ENCODE measurements at regions of chr7 and their contacts with region 1.

Region 1: DNA sequence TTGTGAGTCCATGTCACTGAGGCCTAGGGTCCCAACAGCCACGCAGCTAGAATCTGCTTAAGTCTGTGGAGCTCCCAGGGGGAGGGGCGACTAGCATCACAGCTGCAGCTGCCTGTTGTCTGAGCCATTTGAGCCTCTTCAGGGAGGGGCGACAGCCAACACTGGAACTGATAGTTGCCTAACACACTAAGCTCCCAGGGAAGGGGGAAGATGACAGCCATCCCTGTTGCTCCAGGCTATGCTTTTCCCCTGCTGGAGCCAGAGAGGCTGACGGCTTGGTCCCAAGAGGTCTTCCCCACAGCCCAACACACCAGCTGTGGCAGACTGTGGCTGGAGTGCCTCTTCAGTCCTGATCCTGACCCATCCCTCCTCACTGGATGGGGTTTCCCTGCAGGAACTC is 817.5 kb downstream of the NXPH1 start:
- DNase-seq: no peak
- ATAC-seq: no peak
- H3K4me3 Mint-ChIP-seq: no peak overlapping the region
- H3K27ac Mint-ChIP-seq: no peak overlapping the region
- H3K4me1 Mint-ChIP-seq: no peaks in the 10 kb centered on the region
- H3K27me3 Mint-ChIP-seq: no peaks in the 10 kb centered on the region

Region 2: DNA sequence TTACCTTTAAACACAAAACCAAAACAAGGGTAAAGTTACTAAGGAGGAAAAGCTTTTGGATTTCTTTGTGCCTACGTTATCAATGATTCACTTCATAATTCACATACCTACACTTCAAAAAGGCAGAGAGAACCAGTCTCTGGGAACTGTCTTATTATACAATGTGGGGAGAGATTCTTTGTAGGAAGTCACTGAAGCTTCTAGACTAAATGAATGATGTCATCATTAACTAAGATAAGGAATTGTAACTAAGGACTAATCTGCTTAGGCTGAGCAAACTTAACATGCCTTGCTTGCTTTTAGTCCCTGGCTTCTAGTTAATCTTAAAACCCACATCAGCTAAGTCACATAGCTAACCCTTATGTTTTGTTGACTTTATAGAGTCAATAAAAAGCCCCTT is 46.3 kb before region 1 on chr7:
- CTCF ChIA-PET with region 1: no interaction called
- POLR2A ChIA-PET with region 1: no interaction called
- intact Hi-C with region 1: loop called in 1 of 2 experiments (anchors 5 kb)
- DNase-seq: no peak
- ATAC-seq: no peak
- H3K4me3 Mint-ChIP-seq: no peak overlapping the region
- H3K27ac Mint-ChIP-seq: no peak overlapping the region
- H3K4me1 Mint-ChIP-seq: no peaks in the 10 kb centered on the region
- H3K27me3 Mint-ChIP-seq: no peaks in the 10 kb centered on the region